Activated CD4-positive, alpha-beta memory T cell treated with anti-CD3 and anti-CD28 coated beads, Interleukin-2, amount 10 ng/mL, durations not matched to agents 7 days and 5 days (primary cell): ENCODE measurements at regions of chr1 and their contacts with region 1.

Region 1: DNA sequence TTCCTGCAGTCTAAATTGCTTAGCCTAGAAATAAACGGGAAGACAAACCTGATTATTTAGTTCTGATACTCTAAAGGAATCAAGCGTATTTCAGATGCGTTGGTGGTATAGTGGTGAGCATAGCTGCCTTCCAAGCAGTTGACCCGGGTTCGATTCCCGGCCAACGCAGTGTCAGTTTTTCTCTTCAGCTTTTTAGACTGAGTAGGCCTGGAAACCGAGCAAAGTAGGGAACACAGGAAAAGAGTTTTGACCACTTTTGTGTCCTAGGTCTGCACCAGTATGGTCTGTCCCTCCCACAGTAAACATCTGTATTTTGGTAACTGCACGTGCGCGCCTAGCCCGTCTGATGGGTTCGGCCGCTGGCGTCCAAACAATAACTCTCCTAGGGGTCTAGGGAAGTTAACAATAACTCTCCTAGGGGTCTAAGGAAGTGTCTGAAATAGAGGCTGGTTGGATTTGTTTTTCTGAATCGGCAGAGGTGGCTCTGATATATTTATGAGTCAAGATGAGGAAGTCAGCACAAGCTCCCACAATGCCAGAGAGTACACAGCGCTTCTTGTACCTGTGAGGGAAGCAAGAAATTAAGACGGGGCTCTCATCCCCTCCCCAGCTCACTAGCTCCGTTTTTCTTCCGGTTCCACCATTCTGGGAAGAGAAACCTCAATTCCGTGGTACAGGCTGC is 15.6 kb upstream of the HJV start:
- DNase-seq: peak; percentile 85
- H3K4me3 Mint-ChIP-seq: peak overlapping the region; percentile 90
- H3K27ac Mint-ChIP-seq: peak overlapping the region; percentile 93
- H3K4me1 Mint-ChIP-seq: peaks cover 51% of the 10 kb centered on the region
- H3K27me3 Mint-ChIP-seq: peaks cover 7% of the 10 kb centered on the region

Region 2: DNA sequence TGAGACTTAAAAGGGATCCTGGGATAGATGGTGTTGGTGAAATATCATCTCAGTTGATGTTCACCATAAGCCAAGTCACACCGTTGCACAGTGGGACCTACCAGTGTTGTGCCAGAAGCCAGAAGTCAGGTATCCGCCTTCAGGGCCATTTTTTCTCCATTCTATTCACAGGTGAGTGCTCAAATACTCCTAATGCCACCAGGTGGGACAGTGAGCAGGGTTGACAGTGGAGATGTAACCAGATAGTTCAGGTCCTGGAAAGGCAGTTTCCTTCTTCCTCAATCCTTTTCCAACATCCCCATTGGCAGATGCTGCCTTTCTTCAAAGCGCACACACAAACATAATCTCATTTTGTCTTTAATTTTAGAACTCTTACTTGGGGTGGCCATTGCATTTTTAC is 306.2 kb before region 1 on chr1:
- CTCF ChIA-PET with region 1: no interaction called
- POLR2A ChIA-PET with region 1: no interaction called
- DNase-seq: no peak
- H3K4me3 Mint-ChIP-seq: no peak overlapping the region
- H3K27ac Mint-ChIP-seq: no peak overlapping the region
- H3K4me1 Mint-ChIP-seq: peaks cover 7% of the 10 kb centered on the region
- H3K27me3 Mint-ChIP-seq: no peaks in the 10 kb centered on the region

Region 3: DNA sequence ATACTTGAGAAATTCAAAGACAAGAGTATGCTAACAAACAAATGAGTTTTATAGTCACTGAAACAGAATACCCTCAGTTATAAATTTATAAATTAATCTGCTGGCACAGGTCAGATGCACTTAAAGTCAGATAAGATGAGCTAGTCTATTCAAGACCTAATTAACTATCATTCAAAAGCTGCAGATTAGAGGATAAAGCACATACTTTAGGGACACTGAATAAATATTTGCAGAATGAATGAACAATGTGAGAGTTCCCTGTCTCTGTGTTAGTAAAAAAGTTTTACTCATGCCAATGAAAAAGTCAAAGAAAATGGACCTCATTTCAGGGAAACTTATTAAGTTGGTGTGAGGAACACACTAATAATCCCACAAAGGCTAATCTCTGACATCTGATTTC is 271.5 kb before region 1 on chr1:
- CTCF ChIA-PET with region 1: no interaction called
- POLR2A ChIA-PET with region 1: no interaction called
- DNase-seq: no peak
- H3K4me3 Mint-ChIP-seq: no peak overlapping the region
- H3K27ac Mint-ChIP-seq: no peak overlapping the region
- H3K4me1 Mint-ChIP-seq: no peaks in the 10 kb centered on the region
- H3K27me3 Mint-ChIP-seq: no peaks in the 10 kb centered on the region

Region 4: GRCh38 chr1:145858894-145859490 is 178.1 kb before region 1 on chr1 and contains the start of gene PIAS3:
- CTCF ChIA-PET with region 1: interaction called, 4 read pairs
- POLR2A ChIA-PET with region 1: interaction called, 19 read pairs
- DNase-seq: peak; percentile 90
- H3K4me3 Mint-ChIP-seq: peak within 1 kb of the TSS; percentile 97
- H3K27ac Mint-ChIP-seq: peak within 1 kb of the TSS; percentile 76
- H3K4me1 Mint-ChIP-seq: peaks cover 16% of the 10 kb centered on the region
- H3K27me3 Mint-ChIP-seq: peaks cover 12% of the 10 kb centered on the region
- total RNA-seq, gene PIAS3: 21.2 to 21.7 TPM

Region 5: GRCh38 chr1:145957443-145958319 is 79.4 kb before region 1 on chr1 and contains the start of gene LIX1L:
- CTCF ChIA-PET with region 1: interaction called, 5 read pairs
- POLR2A ChIA-PET with region 1: interaction called, 45 read pairs
- DNase-seq: peak; percentile 96
- H3K4me3 Mint-ChIP-seq: peak within 1 kb of the TSS; percentile 86
- H3K27ac Mint-ChIP-seq: peak within 1 kb of the TSS; percentile 86
- H3K4me1 Mint-ChIP-seq: peaks cover 73% of the 10 kb centered on the region
- H3K27me3 Mint-ChIP-seq: peaks cover 5% of the 10 kb centered on the region
- total RNA-seq, gene LIX1L: 50.3 to 51.0 TPM

Region 6: DNA sequence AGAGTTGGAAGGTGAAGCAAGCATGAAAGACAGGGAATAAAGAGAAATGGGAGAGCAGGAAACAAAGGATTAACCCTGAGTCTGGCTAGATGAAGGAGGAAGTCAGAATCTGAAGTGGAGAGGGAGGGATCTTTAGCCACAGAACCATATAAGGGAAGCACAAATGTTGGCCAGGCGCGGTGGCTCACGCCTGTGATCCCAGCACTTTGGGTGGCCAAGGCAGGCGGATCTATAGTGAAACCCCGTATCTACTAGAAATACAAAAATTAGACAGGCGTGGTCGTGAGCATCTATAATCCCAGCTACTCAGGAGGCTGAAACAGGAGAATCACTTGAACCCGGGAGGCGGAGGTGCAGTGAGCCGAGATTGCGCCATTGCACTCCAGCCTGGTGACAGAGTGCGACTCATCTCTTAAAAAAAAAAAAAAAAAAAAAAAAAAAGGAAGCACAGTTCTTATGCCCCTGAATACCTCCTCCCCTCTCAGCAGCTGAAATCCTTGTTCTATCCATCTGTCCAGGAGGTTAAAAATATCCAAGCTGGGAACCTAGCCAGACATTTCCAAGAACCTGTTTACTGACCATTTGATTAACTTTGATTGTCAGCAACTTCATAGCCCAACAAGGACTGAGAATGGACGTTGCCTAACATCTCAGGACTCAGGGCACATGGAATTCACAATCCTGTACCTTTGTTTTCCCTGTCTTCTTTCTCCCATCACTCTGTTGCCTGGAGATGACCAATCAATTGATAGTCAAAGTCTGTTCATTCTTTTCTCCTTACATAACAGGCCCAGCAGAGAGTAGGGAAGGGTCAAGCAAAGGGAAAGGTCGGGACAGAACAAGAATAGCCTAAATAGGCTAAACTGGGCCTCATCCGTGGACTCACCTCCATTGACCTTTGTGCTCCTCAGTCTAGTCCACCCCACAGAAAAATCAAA is 51.3 kb before region 1 on chr1:
- CTCF ChIA-PET with region 1: interaction called, 10 read pairs
- POLR2A ChIA-PET with region 1: interaction called, 45 read pairs
- DNase-seq: no peak
- H3K4me3 Mint-ChIP-seq: no peak overlapping the region
- H3K27ac Mint-ChIP-seq: peak overlapping the region; percentile 73
- H3K4me1 Mint-ChIP-seq: peaks cover 34% of the 10 kb centered on the region
- H3K27me3 Mint-ChIP-seq: no peaks in the 10 kb centered on the region

Region 7: GRCh38 chr1:146019231-146020057 is 17.7 kb before region 1 on chr1:
- CTCF ChIA-PET with region 1: interaction called, 21 read pairs
- POLR2A ChIA-PET with region 1: no interaction called
- DNase-seq: no peak
- H3K4me3 Mint-ChIP-seq: no peak overlapping the region
- H3K27ac Mint-ChIP-seq: no peak overlapping the region
- H3K4me1 Mint-ChIP-seq: peaks cover 9% of the 10 kb centered on the region
- H3K27me3 Mint-ChIP-seq: peaks cover 73% of the 10 kb centered on the region